Posterior vena cava (tissue), 2 donors: ENCODE measurements at regions of chr17 and their contacts with region 1.

Region 1: DNA sequence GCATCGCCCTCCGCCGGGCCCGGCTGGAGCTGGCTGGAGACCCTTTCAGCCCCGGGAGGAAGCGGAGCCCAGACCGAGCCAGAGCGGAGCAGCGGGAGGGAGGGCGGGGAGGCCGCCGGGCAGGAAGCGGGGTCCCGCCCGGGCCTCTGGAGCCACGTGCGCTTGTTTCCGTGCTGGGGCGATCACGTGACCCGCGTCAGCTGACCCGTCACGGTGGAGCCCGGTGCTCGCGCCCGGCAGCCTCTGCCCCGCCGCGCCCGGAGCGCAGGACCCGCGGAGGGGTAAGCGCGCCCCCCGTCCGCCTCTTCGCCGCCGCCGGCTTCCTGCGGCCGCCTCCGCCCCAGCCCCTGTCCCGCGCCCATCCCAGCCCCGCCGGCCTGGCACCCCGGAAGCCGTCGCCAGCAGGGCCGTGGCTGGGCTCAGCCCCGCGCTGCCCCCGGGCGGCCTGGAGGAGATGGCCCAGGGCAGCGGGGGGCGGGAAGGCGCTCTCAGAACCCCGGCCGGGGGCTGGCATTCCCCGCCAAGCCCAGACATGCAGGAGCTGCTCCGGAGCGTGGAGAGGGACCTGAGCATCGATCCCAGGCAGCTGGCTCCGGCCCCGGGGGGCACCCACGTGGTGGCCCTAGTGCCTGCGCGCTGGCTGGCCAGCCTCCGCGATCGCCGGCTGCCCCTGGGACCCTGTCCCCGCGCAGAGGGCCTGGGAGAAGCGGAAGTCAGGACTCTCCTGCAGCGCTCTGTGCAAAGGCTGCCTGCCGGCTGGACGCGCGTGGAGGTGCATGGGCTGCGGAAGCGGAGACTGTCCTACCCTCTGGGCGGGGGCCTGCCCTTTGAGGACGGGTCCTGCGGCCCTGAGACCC is at the start of gene WDR81:
- DNase-seq: peak; percentile 98
- total RNA-seq, gene WDR81: 26.3 to 30.8 TPM

Region 2: GRCh38 chr17:1764284-1764683 is 39.5 kb after region 1 on chr17:
- intact Hi-C with region 1: loop called in 1 of 2 experiments (anchors 2 kb)
- DNase-seq: peak; percentile 92

Region 3: DNA sequence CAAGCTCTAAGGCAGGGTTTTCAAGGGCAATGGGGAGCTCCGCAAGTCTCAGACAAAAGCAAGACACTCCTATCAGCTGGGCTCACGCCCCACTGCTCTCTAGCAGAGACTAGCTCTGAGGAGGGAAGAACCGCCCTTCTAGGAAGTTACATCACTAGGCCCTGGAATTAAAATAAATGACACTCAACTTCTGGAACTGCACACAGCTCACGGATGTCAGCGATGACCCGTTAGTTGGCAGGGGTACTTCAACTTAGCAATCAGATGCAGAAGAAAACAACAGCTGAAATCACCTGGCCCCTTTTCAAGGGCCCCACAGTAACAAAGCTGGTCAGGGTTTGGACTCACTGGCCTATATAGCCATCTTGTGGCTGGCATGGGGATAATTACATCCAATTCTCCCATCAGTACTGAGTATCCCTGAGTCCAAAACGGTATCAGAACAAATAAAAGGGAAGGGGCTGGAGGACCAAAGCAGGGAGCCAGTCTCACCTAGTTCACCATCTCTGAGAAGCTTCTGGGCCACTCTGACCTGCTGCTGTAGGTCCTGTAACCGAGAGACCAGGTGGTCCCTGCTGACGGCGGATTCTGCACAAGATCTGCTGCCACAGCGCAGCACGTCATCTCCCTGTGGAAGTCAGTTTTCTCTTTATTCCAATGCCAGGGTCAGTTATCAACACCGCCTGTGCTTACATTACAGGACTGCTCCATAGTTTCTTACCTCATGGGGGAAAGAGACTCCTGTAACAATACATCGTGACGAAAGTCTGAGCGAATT is 59.3 kb after region 1 on chr17:
- intact Hi-C with region 1: loop called (anchors 2 to 5 kb)
- DNase-seq: peak; percentile 95

Region 4: GRCh38 chr17:1865252-1866037 is 140.7 kb after region 1 on chr17:
- intact Hi-C with region 1: loop called in 1 of 2 experiments (anchors 10 kb)
- DNase-seq: no peak